Activated CD4-positive, alpha-beta T cell treated with anti-CD3 and anti-CD28 coated beads, Interleukin-2, amount 10 ng/mL, durations not matched to agents 24 days and 14 days (primary cell): ENCODE measurements at regions of chr4 and their contacts with region 1.

Region 1: GRCh38 chr4:139554893-139555704 is 920 bp downstream of the SETD7 start:
- DNase-seq: peak; percentile 95
- H3K4me3 Mint-ChIP-seq: peak overlapping the region; percentile 89
- H3K27ac Mint-ChIP-seq: peak overlapping the region; percentile 97
- H3K4me1 Mint-ChIP-seq: peaks cover 38% of the 10 kb centered on the region
- H3K27me3 Mint-ChIP-seq: peaks cover 7% of the 10 kb centered on the region

Region 2: DNA sequence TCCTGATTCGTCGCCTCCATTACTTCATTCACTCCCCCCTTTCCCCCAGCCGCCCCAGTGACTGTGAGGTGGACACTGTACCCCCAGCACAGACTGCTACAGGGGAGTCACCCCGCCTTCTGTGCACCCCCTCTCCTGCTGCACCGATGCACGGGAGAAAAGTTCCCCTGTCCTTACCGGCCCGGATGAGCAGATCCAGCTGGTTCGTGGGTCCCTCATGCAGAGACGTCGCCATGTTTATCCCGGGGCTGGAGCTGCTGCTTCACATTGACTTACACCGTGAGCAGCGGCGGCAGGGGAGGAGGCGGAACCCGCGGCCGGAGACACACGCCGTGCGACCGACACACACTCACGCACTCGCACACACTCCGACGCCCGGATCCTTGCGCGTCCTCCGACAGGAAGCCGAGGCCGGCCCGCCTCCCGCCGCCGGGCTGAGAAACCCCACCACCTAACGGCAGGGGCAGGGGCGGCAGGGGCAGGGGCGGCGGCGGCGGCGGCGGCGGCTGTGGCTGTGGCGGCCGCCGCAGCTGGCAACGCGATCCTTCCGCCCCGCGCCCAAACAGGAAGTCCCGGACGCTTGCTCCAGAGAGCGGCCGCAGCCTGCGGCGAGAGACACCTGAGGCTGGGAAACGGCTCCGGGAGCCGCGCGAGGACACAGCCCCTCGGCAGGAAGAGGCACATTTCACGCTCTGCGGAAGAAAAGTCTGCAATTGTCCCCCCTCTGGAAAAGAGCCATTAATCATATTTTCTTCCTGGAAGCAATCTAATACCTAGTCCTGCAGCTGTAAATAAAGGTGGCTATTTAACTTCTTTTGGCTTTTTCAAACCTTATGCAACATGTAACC is 470.9 kb before region 1 on chr4:
- intact Hi-C with region 1: loop called (anchors 5 kb)
- DNase-seq: peak; percentile 95
- H3K4me3 Mint-ChIP-seq: peak overlapping the region; percentile 100
- H3K27ac Mint-ChIP-seq: peak overlapping the region; percentile 100
- H3K4me1 Mint-ChIP-seq: peaks cover 30% of the 10 kb centered on the region
- H3K27me3 Mint-ChIP-seq: peaks cover 2% of the 10 kb centered on the region

Region 3: GRCh38 chr4:139416073-139416673 is 138.9 kb before region 1 on chr4:
- intact Hi-C with region 1: loop called (anchors 5 kb)
- DNase-seq: peak; percentile 74
- H3K4me3 Mint-ChIP-seq: no peak overlapping the region
- H3K27ac Mint-ChIP-seq: no peak overlapping the region
- H3K4me1 Mint-ChIP-seq: peaks cover 17% of the 10 kb centered on the region
- H3K27me3 Mint-ChIP-seq: no peaks in the 10 kb centered on the region

Region 4: GRCh38 chr4:139530833-139531427 is 24.2 kb before region 1 on chr4:
- intact Hi-C with region 1: loop called (anchors 1 kb)
- DNase-seq: peak; percentile 89
- H3K4me3 Mint-ChIP-seq: no peak overlapping the region
- H3K27ac Mint-ChIP-seq: no peak overlapping the region
- H3K4me1 Mint-ChIP-seq: peaks cover 5% of the 10 kb centered on the region
- H3K27me3 Mint-ChIP-seq: no peaks in the 10 kb centered on the region

Region 5: GRCh38 chr4:140095694-140096482 is 540.8 kb after region 1 on chr4:
- intact Hi-C with region 1: loop called (anchors 5 kb)
- DNase-seq: peak; percentile 88
- H3K4me3 Mint-ChIP-seq: peak overlapping the region; percentile 86
- H3K27ac Mint-ChIP-seq: peak overlapping the region; percentile 94
- H3K4me1 Mint-ChIP-seq: peaks cover 72% of the 10 kb centered on the region
- H3K27me3 Mint-ChIP-seq: peaks cover 4% of the 10 kb centered on the region

Region 6: GRCh38 chr4:140523857-140524742 is 969.0 kb after region 1 on chr4 and contains the start of gene ELMOD2:
- intact Hi-C with region 1: loop called (anchors 5 kb)
- DNase-seq: peak; percentile 99
- H3K4me3 Mint-ChIP-seq: peak within 1 kb of the TSS; percentile 85
- H3K27ac Mint-ChIP-seq: peak within 1 kb of the TSS; percentile 34
- H3K4me1 Mint-ChIP-seq: peaks cover 16% of the 10 kb centered on the region
- H3K27me3 Mint-ChIP-seq: peaks cover 1% of the 10 kb centered on the region
- total RNA-seq, gene ELMOD2: 10.5 and 12.3 TPM in 2 replicates

Region 7: GRCh38 chr4:140595065-140595464 is 1040.0 kb after region 1 on chr4:
- intact Hi-C with region 1: no loop called
- DNase-seq: no peak
- H3K4me3 Mint-ChIP-seq: no peak overlapping the region
- H3K27ac Mint-ChIP-seq: no peak overlapping the region
- H3K4me1 Mint-ChIP-seq: no peaks in the 10 kb centered on the region
- H3K27me3 Mint-ChIP-seq: peaks cover 39% of the 10 kb centered on the region

Region 8: GRCh38 chr4:141102367-141102766 is 1547.3 kb after region 1 on chr4:
- intact Hi-C with region 1: no loop called
- DNase-seq: no peak
- H3K4me3 Mint-ChIP-seq: no peak overlapping the region
- H3K27ac Mint-ChIP-seq: no peak overlapping the region
- H3K4me1 Mint-ChIP-seq: no peaks in the 10 kb centered on the region
- H3K27me3 Mint-ChIP-seq: no peaks in the 10 kb centered on the region